Left cardiac atrium (tissue), 4 donors: ENCODE measurements at regions of chr4 and their contacts with region 1.

Region 1: GRCh38 chr4:185471235-185472102 is at the start of gene CCDC110:
- DNase-seq: peak; percentile 95
- ATAC-seq: peak; percentile 99
- total RNA-seq, gene CCDC110: 1.6 to 2.0 TPM

Region 2: GRCh38 chr4:185425647-185426352 is 45.7 kb before region 1 on chr4 and contains the start of gene UFSP2:
- intact Hi-C with region 1: loop called in 1 of 2 experiments (anchors 5 kb)
- DNase-seq: peak; percentile 92
- ATAC-seq: peak; percentile 96 to 97
- total RNA-seq, gene UFSP2: 37.0 to 43.0 TPM